ENCODE measurements at regions of chr12 and their contacts with region 1.

Region 1: DNA sequence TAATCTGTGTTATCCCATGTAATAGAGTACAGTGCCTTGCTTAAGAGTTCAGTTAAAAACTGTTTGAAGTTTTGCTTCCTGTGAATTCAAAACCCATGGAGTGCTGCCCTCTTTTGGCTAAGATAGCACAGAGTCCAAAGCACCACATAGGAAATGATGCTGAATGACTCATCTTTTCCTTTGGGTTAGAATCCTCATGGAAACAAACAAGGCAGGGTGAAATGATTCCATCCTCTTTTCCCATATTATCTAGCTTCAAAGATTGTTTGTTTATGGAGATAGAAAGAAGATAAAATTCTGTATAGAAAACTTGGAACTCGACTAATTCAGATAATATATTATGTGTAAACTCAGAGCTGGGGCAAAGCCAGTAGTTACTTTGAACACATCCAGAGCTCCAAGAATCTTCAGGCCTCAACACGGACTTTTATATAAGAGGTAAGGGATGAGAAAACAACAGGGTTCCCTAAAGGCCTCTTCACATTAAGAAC is 87.4 kb downstream of the OTOGL start:
- DNase-seq: peak; percentile 82 to 85 (median 84)
- H3K4me3 ChIP-seq: no peak overlapping the region
- H3K27ac ChIP-seq: peak overlapping the region; percentile 62 to 83
- H3K4me1 ChIP-seq: peaks cover 0 to 18% (median 7%) of the 10 kb centered on the region in 4 experiments
- H3K27me3 ChIP-seq: no peaks in the 10 kb centered on the region

Region 2: DNA sequence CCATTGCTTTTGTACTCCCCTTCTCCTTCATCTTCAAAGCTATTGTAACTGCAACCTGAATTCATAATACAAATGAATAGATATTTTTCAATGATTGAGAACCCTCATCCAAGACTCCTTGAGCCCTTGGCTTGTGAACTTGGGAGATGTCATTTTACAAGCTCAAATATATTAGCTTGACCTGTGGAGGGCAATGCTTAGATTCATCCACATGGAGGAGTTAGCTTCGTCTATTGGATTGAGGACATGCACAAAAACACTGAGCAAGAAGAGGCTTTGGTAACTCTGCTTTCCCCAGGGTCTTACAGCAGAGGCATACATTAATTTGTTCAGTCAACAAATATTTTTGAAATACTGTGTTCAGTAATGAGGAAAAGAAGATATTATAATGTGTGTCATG is 13.6 kb after region 1 on chr12:
- CTCF ChIA-PET with region 1: interaction called, 16 read pairs
- POLR2A ChIA-PET with region 1: no interaction called
- DNase-seq: no peak
- H3K4me3 ChIP-seq: no peak overlapping the region
- H3K27ac ChIP-seq: no peak overlapping the region
- H3K4me1 ChIP-seq: no peaks in the 10 kb centered on the region
- H3K27me3 ChIP-seq: no peaks in the 10 kb centered on the region

Region 3: GRCh38 chr12:80364056-80364455 is 177.3 kb after region 1 on chr12:
- CTCF ChIA-PET with region 1: no interaction called
- POLR2A ChIA-PET with region 1: no interaction called
- DNase-seq: no peak
- H3K4me3 ChIP-seq: no peak overlapping the region
- H3K27ac ChIP-seq: no peak overlapping the region
- H3K4me1 ChIP-seq: no peaks in the 10 kb centered on the region
- H3K27me3 ChIP-seq: no peaks in the 10 kb centered on the region

Region 4: DNA sequence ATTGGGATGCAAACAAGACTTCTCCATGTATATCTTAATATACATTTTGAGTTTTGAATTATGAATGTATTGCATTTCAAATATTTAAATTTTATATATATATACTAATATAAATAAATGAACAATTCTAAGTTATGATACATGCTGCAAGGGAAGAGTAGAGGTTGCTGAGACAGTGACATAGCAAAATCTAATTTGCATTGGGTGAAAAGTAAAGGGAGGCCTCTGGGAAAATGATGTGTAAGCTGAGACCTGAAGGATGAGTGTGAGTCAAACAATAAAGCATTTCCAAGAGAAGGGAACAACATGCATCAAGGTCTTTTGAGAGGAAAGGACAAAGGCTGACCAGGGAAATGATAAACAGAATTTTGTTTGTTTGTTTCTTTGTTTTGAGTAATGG is 194.3 kb after region 1 on chr12:
- CTCF ChIA-PET with region 1: no interaction called
- POLR2A ChIA-PET with region 1: no interaction called
- DNase-seq: no peak
- H3K4me3 ChIP-seq: no peak overlapping the region
- H3K27ac ChIP-seq: no peak overlapping the region
- H3K4me1 ChIP-seq: no peaks in the 10 kb centered on the region
- H3K27me3 ChIP-seq: no peaks in the 10 kb centered on the region